GM12878 (cell line): ENCODE measurements at regions of chr2 and their contacts with region 1.

Region 1: DNA sequence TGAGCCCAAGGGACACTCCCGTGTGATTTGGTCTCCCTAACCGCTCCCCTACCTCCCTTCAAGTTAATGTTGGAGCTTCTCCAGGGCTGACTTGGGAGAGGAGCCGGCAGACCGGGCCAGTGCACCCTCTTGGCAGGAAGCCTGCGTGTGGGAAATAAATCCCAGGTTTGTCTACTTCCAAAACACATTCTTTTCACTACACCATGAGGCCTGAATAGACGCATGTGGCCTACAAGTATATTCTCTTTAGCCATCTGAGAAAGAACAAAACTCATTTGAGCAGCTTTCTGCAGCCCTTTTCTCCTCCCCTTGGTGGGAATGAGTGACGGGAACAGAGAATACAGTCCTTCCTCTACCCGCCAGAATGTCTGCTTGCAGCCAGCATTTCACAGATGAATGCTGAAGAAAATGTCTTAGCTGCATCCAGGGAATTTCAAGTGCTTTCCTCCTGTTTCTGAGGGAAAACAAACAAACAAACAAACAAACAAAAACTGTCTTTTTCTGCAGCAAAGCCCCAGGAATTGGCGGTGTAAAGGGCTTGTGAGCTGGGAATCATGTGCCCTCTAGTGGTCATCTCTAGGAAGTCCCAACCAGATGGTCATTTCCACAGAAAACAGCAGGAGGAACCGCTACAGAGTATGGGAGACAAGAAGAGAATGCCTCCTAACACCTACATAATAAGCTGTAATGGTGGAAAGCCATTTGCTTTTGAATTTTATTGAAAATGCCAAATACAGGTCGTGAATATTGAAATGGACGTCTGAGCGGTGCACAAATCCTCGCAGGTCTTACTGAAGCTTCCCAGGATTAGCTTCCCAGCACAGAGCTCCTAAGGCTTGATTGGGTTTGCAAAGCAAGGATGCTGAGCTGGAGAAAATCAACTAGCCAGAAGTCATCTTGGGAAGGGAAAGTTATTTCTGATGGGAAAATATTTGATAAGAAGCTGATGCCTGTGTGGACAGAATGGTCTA is 41.2 kb upstream of the DAPL1 start:
- DNase-seq: no peak
- ATAC-seq: peak; percentile 95
- H3K4me3 ChIP-seq: no peak overlapping the region
- H3K27ac ChIP-seq: no peak overlapping the region
- H3K4me1 ChIP-seq: no peaks in the 10 kb centered on the region
- H3K27me3 ChIP-seq: no peaks in the 10 kb centered on the region
- CTCF ChIP-seq: peak; percentile 84 to 91 (median 85)
- EP300 ChIP-seq: no peak
- POLR2A ChIP-seq: no peak
- RAD21 ChIP-seq: peak; percentile 78

Region 2: DNA sequence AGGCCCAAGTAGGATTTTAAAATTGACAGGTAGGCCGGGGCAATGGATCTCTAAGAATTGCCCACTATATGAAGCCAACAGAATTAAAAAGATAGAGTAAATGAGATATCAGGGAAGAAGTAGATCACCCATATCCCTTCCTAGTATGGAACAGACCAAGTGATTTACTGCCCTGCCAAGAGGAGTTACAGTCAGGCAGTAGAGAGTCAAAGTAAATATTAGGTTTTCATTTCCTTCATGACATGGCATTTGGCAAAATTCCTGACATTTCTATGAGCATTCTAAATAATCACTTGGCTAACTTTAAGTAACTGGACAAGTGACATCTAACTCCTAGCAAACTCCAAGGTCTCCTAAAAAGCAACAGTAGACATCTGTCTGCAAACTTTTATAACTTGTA is 1462.9 kb before region 1 on chr2:
- CTCF ChIA-PET with region 1: no interaction called
- POLR2A ChIA-PET with region 1: no interaction called
- RAD21 ChIA-PET with region 1: no interaction called
- SMC1A ChIA-PET with region 1: no interaction called
- in situ Hi-C with region 1: loop called (anchors 25 kb)
- intact Hi-C with region 1: no loop called
- DNase-seq: no peak
- ATAC-seq: no peak
- H3K4me3 ChIP-seq: no peak overlapping the region
- H3K27ac ChIP-seq: no peak overlapping the region
- H3K4me1 ChIP-seq: no peaks in the 10 kb centered on the region
- H3K27me3 ChIP-seq: peaks cover 0 to 3% of the 10 kb centered on the region in 2 experiments; a peak in 2 of 4 replicates
- CTCF ChIP-seq: no peak
- EP300 ChIP-seq: no peak
- POLR2A ChIP-seq: no peak
- RAD21 ChIP-seq: no peak

Region 3: GRCh38 chr2:157777427-157777826 is 976.5 kb before region 1 on chr2:
- CTCF ChIA-PET with region 1: interaction called, 3 read pairs
- POLR2A ChIA-PET with region 1: no interaction called
- RAD21 ChIA-PET with region 1: no interaction called
- SMC1A ChIA-PET with region 1: no interaction called
- in situ Hi-C with region 1: no loop called
- intact Hi-C with region 1: loop called (anchors 10 kb)
- DNase-seq: no peak
- ATAC-seq: no peak
- H3K4me3 ChIP-seq: no peak overlapping the region
- H3K27ac ChIP-seq: no peak overlapping the region
- H3K4me1 ChIP-seq: no peaks in the 10 kb centered on the region
- H3K27me3 ChIP-seq: peaks cover 0 to 1% of the 10 kb centered on the region in 2 experiments; a peak in 3 of 4 replicates
- CTCF ChIP-seq: peak; percentile 18 to 37 (median 34); a peak in 4 of 6 replicates
- EP300 ChIP-seq: no peak
- POLR2A ChIP-seq: no peak
- RAD21 ChIP-seq: peak; percentile 60

Region 4: DNA sequence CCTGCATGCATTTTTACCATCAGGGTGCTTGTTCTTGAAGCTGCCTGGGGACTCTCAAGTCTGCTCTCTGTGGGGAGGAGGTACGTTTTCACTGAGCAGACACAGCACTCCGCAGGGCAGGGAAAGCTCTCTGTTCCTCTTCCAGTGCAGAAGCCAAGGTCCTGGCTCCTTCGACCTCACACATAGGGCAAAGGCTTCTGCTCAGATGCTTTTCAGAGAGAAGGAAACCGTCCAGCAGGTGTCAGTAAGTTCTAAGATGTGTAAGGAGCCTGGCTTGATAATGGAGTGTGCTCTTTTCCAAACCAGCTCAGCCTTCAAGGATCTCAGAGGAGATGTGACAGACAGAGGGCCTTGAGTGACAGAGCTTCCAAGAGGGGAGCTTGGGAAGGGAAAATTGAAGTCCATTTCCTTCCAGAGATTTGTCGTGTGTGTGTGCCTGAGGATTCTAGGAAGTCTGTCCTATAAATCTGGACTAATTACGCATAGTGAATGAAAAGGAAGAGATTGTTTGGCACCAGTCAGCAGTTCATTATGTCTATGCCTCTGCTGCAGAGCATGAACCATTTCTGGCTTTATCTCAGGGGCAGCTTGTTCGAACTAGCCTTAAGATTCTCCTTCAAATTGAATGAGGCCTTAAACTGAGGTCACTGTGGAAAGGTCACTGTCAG is 719.6 kb before region 1 on chr2:
- CTCF ChIA-PET with region 1: interaction called, 13 read pairs
- POLR2A ChIA-PET with region 1: no interaction called
- RAD21 ChIA-PET with region 1: interaction called, 4 read pairs
- SMC1A ChIA-PET with region 1: interaction called, 8 read pairs
- in situ Hi-C with region 1: loop called (anchors 5 kb)
- intact Hi-C with region 1: loop called (anchors 1 kb)
- DNase-seq: no peak
- ATAC-seq: peak; percentile 74
- H3K4me3 ChIP-seq: no peak overlapping the region
- H3K27ac ChIP-seq: no peak overlapping the region
- H3K4me1 ChIP-seq: no peaks in the 10 kb centered on the region
- H3K27me3 ChIP-seq: no peaks in the 10 kb centered on the region; a peak in 1 of 4 replicates
- CTCF ChIP-seq: peak; percentile 38 to 50 (median 43); a peak in 5 of 6 replicates
- EP300 ChIP-seq: no peak
- POLR2A ChIP-seq: no peak
- RAD21 ChIP-seq: peak; percentile 63

Region 5: GRCh38 chr2:158464426-158465281 is 289.3 kb before region 1 on chr2:
- CTCF ChIA-PET with region 1: interaction called, 4 read pairs
- POLR2A ChIA-PET with region 1: no interaction called
- RAD21 ChIA-PET with region 1: interaction called, 3 read pairs
- SMC1A ChIA-PET with region 1: no interaction called
- in situ Hi-C with region 1: no loop called
- intact Hi-C with region 1: loop called (anchors 5 kb)
- DNase-seq: no peak
- ATAC-seq: peak; percentile 85
- H3K4me3 ChIP-seq: no peak overlapping the region
- H3K27ac ChIP-seq: no peak overlapping the region
- H3K4me1 ChIP-seq: no peaks in the 10 kb centered on the region; the same call in 1 of the 2 replicates
- H3K27me3 ChIP-seq: no peaks in the 10 kb centered on the region
- CTCF ChIP-seq: peak; percentile 44 to 61 (median 45); a peak in 5 of 6 replicates
- EP300 ChIP-seq: no peak
- POLR2A ChIP-seq: no peak
- RAD21 ChIP-seq: peak; percentile 46

Region 6: DNA sequence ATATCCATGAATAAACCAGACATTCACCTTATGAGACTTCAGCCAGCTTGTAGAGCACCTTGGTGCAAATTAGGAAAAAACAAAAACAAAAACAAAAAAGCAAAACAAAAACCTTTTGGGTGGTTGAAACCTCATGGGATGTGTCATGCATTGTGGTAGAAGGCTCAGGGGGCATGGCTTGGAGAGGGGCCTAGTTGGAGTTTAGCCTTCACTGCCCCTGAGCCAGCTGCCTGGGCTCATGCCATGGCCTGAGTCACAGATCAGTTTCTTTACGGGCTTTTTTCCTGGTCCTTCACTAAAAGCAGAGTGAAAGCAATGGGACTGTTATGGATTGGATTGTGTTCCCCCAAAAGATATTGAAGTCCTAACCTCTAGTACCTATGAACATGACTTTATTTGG is 19.2 kb after region 1 on chr2:
- CTCF ChIA-PET with region 1: interaction called, 10 read pairs
- POLR2A ChIA-PET with region 1: no interaction called
- RAD21 ChIA-PET with region 1: no interaction called
- SMC1A ChIA-PET with region 1: interaction called, 3 read pairs
- in situ Hi-C with region 1: no loop called
- intact Hi-C with region 1: no loop called
- DNase-seq: no peak
- ATAC-seq: no peak
- H3K4me3 ChIP-seq: no peak overlapping the region
- H3K27ac ChIP-seq: no peak overlapping the region
- H3K4me1 ChIP-seq: no peaks in the 10 kb centered on the region
- H3K27me3 ChIP-seq: no peaks in the 10 kb centered on the region
- CTCF ChIP-seq: no peak
- EP300 ChIP-seq: no peak
- POLR2A ChIP-seq: no peak
- RAD21 ChIP-seq: no peak